Caco-2 (cell line): ENCODE measurements at regions of chr11 and their contacts with region 1.

Region 1: GRCh38 chr11:76860539-76861475 is at the start of gene ACER3:
- DNase-seq: peak; percentile 95 to 99
- H3K4me3 ChIP-seq: peak within 1 kb of the TSS; percentile 73
- H3K4me3 Mint-ChIP-seq: peak within 1 kb of the TSS; percentile 94
- H3K27ac Mint-ChIP-seq: peak within 1 kb of the TSS; percentile 85
- H3K4me1 ChIP-seq: peaks cover 27% of the 10 kb centered on the region
- H3K4me1 Mint-ChIP-seq: peaks cover 35% of the 10 kb centered on the region
- H3K27me3 ChIP-seq: no peaks in the 10 kb centered on the region
- H3K27me3 Mint-ChIP-seq: no peaks in the 10 kb centered on the region
- CTCF ChIP-seq: peak in 1 of 2 experiments; percentile 72
- total RNA-seq, gene ACER3: 37.5 and 40.6 TPM in 2 replicates

Region 2: GRCh38 chr11:76768088-76768908 is 92.5 kb before region 1 on chr11:
- CTCF ChIA-PET with region 1: no interaction called
- POLR2A ChIA-PET with region 1: no interaction called
- intact Hi-C with region 1: no loop called
- DNase-seq: no peak
- H3K4me3 ChIP-seq: no peak overlapping the region
- H3K4me3 Mint-ChIP-seq: no peak overlapping the region
- H3K27ac Mint-ChIP-seq: peak overlapping the region; percentile 22
- H3K4me1 ChIP-seq: peaks cover 51% of the 10 kb centered on the region
- H3K4me1 Mint-ChIP-seq: peaks cover 46% of the 10 kb centered on the region
- H3K27me3 ChIP-seq: no peaks in the 10 kb centered on the region
- H3K27me3 Mint-ChIP-seq: no peaks in the 10 kb centered on the region
- CTCF ChIP-seq: no peak

Region 3: DNA sequence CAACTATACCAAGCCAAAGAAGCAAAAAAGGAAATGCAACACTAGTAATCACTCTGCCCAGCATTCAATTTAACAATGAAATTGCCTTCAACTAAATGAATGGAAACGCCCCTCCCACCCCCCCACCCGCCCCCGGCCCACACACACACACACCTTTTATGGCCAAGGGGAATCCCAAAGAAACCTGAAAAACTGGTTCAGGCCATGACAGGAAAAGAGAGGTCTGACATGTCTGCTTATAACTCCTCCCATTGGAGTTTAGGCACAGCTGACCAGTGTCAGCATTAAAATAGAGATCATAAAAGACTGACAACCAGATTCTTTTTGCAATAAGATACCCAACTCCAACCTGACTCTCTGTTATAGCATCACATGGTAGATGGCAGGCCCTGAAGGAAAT is 42.5 kb after region 1 on chr11:
- CTCF ChIA-PET with region 1: no interaction called
- POLR2A ChIA-PET with region 1: no interaction called
- intact Hi-C with region 1: loop called (anchors 2 kb)
- DNase-seq: peak; percentile 84 to 85
- H3K4me3 ChIP-seq: no peak overlapping the region
- H3K4me3 Mint-ChIP-seq: no peak overlapping the region
- H3K27ac Mint-ChIP-seq: no peak overlapping the region
- H3K4me1 ChIP-seq: peaks cover 22% of the 10 kb centered on the region
- H3K4me1 Mint-ChIP-seq: peaks cover 20% of the 10 kb centered on the region
- H3K27me3 ChIP-seq: no peaks in the 10 kb centered on the region
- H3K27me3 Mint-ChIP-seq: no peaks in the 10 kb centered on the region
- CTCF ChIP-seq: no peak